ENCODE measurements at regions of chr22 and their contacts with region 1.

Region 1: GRCh38 chr22:45268958-45269844 is 15.5 kb upstream of the UPK3A start:
- DNase-seq: peak; percentile 82 to 94 (median 87)
- H3K4me3 ChIP-seq: peak overlapping the region; percentile 52 to 68
- H3K4me3 Mint-ChIP-seq: peak overlapping the region; percentile 71 to 90 (median 82)
- H3K27ac ChIP-seq: no peak overlapping the region
- H3K27ac Mint-ChIP-seq: peak overlapping the region; percentile 34 to 88 (median 62)
- H3K4me1 ChIP-seq: peaks cover 10% of the 10 kb centered on the region
- H3K4me1 Mint-ChIP-seq: peaks cover 4 to 18% (median 6%) of the 10 kb centered on the region in 4 donors
- H3K27me3 ChIP-seq: no peaks in the 10 kb centered on the region
- H3K27me3 Mint-ChIP-seq: peaks cover 1 to 9% of the 10 kb centered on the region in 2 donors

Region 2: DNA sequence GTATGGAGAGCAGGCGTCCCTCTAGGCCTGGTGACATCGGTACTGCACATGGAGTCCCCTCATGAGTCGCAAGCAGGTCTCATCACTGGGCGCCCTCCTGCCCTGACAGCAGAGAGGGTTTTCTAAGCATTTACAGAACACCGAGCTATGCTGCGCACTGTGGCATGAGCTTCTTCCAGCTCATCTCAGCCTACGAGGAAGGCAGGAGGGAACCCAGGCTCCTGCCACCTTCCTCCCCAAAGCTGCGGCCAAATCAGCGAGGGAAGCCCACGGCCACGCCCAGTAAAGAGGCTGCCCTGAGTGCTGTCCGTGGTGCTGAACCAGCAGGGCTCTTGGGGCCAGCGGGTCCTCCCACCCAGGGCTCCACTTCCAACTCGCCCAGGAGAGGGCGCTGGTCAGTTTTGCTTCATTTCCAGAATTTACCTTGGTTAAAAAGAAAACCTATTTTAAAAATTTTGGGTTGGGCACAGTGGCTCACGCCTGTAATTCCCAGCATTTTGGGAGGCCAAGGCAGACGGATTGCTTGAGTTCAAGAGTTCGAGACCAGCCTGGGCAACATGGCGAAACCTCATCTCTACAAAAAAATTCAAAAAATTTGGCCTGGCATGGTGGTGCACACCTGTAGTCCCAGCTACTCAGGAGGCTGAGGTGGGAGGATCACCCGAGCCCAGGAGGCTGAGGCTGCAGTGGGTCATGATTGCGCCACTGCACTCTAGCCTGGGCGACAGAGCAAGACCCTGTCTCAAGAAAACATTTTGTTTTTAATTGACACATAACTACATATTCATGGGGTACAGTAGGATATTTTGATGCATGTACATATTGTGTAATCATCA is 293.6 kb before region 1 on chr22:
- CTCF ChIA-PET with region 1: no interaction called
- POLR2A ChIA-PET with region 1: no interaction called
- intact Hi-C with region 1: no loop called
- DNase-seq: peak in 4 of 5 donors; percentile 14 to 45 (median 34)
- H3K4me3 ChIP-seq: no peak overlapping the region
- H3K4me3 Mint-ChIP-seq: no peak overlapping the region
- H3K27ac ChIP-seq: no peak overlapping the region
- H3K27ac Mint-ChIP-seq: no peak overlapping the region
- H3K4me1 ChIP-seq: no peaks in the 10 kb centered on the region
- H3K4me1 Mint-ChIP-seq: peaks cover 0 to 2% (median 0%) of the 10 kb centered on the region in 4 donors
- H3K27me3 ChIP-seq: no peaks in the 10 kb centered on the region
- H3K27me3 Mint-ChIP-seq: peaks cover 15 to 22% of the 10 kb centered on the region in 2 donors

Region 3: GRCh38 chr22:45240810-45241631 is 28.2 kb before region 1 on chr22 and contains the start of gene KIAA0930:
- CTCF ChIA-PET with region 1: interaction called, 3 read pairs
- POLR2A ChIA-PET with region 1: no interaction called
- intact Hi-C with region 1: loop called (anchors 2 kb)
- DNase-seq: peak; percentile 67 to 88 (median 73)
- H3K4me3 ChIP-seq: peak within 1 kb of the TSS; percentile 57 to 62
- H3K4me3 Mint-ChIP-seq: peak within 1 kb of the TSS; percentile 90 to 96 (median 92)
- H3K27ac ChIP-seq: peak within 1 kb of the TSS; percentile 36
- H3K27ac Mint-ChIP-seq: peak within 1 kb of the TSS; percentile 87 to 96 (median 90)
- H3K4me1 ChIP-seq: peaks cover 21% of the 10 kb centered on the region
- H3K4me1 Mint-ChIP-seq: peaks cover 10 to 51% (median 22%) of the 10 kb centered on the region in 4 donors
- H3K27me3 ChIP-seq: no peaks in the 10 kb centered on the region
- H3K27me3 Mint-ChIP-seq: no peaks in the 10 kb centered on the region
- total RNA-seq, gene KIAA0930: 27.9 to 36.7 TPM

Region 4: DNA sequence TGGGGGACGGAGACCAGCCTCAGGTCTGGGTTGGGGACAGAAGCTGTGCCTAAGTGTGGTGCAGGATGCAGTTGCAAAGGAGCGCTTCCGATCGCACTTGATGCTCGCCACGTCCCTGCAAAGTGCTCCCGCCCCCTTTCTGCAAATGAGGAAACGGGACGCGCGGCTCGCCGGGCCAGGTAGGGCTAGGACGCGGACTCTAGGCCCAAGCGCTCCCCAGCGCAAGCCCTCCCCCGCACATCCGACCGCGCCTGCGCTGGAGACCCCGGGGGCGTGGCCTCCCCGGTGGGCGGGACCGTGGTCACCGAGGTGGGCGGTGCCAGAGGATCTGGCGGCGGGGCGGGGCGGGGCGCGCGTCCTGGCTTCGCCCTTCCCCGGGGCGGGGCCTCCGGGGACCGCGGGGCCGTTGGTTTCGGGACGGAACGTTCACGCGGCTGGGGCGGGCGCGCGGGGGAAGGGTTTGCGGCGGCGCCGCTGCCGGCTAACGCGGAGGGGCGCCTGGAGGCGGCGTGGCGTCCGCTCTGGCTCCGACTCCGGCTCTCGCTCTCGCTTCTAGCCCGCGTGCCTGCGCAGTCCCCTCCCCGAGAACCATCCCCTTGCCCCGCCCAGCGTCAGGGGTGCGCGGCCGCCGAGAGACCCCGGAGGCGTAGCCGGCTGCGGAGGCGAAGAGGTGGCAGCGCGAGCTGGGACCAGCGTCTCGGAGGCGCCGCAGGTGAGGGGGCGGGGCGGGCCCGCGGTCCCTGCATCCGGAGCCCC is 40.4 kb after region 1 on chr22 and contains the start of gene FAM118A:
- CTCF ChIA-PET with region 1: interaction called, 4 read pairs
- POLR2A ChIA-PET with region 1: no interaction called
- intact Hi-C with region 1: loop called (anchors 1 kb)
- DNase-seq: peak; percentile 88 to 100 (median 95)
- H3K4me3 ChIP-seq: peak within 1 kb of the TSS; percentile 76 to 80
- H3K4me3 Mint-ChIP-seq: peak within 1 kb of the TSS; percentile 86 to 94 (median 90)
- H3K27ac ChIP-seq: peak within 1 kb of the TSS; percentile 82
- H3K27ac Mint-ChIP-seq: peak within 1 kb of the TSS; percentile 94 to 97 (median 95)
- H3K4me1 ChIP-seq: peaks cover 41% of the 10 kb centered on the region
- H3K4me1 Mint-ChIP-seq: peaks cover 38 to 54% (median 46%) of the 10 kb centered on the region in 4 donors
- H3K27me3 ChIP-seq: no peaks in the 10 kb centered on the region
- H3K27me3 Mint-ChIP-seq: no peaks in the 10 kb centered on the region
- total RNA-seq, gene FAM118A: 119 to 122 TPM

Region 5: GRCh38 chr22:45435544-45436139 is 166.4 kb after region 1 on chr22:
- CTCF ChIA-PET with region 1: interaction called, 32 read pairs
- POLR2A ChIA-PET with region 1: no interaction called
- intact Hi-C with region 1: no loop called
- DNase-seq: peak; percentile 75 to 80 (median 76)
- H3K4me3 ChIP-seq: no peak overlapping the region
- H3K4me3 Mint-ChIP-seq: no peak overlapping the region
- H3K27ac ChIP-seq: no peak overlapping the region
- H3K27ac Mint-ChIP-seq: peak overlapping the region in 3 of 7 donors; percentile 14 to 74 (median 47)
- H3K4me1 ChIP-seq: peaks cover 8% of the 10 kb centered on the region
- H3K4me1 Mint-ChIP-seq: peaks cover 6 to 16% (median 11%) of the 10 kb centered on the region in 4 donors
- H3K27me3 ChIP-seq: no peaks in the 10 kb centered on the region
- H3K27me3 Mint-ChIP-seq: no peaks in the 10 kb centered on the region

Measured in CD4-positive, alpha-beta memory T cell (primary cell).